ENCODE measurements at regions of chr2 and their contacts with region 1.

Region 1: DNA sequence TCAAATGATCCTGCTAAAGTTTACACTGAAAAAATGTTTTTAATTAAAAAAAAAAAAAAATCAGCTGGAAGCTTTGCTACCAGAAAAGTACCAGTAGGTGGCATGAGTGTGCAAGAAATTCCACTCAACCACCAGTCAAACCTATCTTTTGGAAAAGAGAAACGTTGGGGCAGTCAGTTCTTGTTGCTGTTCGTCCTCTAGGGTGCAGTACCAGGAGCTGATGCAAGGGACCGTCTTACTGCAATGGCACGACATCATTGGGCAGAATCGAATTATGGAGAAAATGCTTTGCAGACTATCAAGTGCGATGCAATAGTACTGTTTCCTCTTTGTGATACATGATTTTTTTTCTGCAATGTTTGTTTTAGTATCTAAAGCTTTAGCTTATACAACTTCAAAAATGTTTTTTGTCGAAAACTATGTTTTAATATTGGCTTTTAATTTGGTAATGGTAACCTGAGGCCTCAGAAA is 18.3 kb downstream of the YPEL5 start:
- DNase-seq: peak; percentile 77
- H3K4me3 Mint-ChIP-seq: no peak overlapping the region
- H3K27ac Mint-ChIP-seq: no peak overlapping the region
- H3K4me1 Mint-ChIP-seq: peaks cover 6% of the 10 kb centered on the region
- H3K27me3 Mint-ChIP-seq: no peaks in the 10 kb centered on the region

Region 2: DNA sequence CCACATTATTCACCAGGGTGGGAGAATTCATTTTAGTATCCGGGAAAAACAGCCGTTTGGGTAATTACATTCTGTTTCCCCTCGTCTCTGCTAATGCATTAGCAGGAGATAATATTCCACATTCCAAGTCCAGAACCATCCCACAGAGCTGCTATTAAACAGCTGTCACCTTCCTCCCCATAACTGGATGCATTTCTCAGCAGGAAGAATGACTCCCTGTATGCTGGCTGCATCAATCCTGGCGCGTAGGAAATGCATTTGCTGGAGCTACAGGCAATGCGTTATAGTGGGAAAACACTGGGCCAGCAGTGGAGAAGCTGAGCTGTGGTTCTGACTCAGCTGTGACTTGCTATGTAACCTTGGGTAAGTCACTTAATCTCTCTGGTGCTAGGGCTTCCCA is 803.9 kb before region 1 on chr2:
- CTCF ChIA-PET with region 1: no interaction called
- intact Hi-C with region 1: no loop called
- DNase-seq: no peak
- H3K4me3 Mint-ChIP-seq: no peak overlapping the region
- H3K27ac Mint-ChIP-seq: no peak overlapping the region
- H3K4me1 Mint-ChIP-seq: no peaks in the 10 kb centered on the region
- H3K27me3 Mint-ChIP-seq: peaks cover 6% of the 10 kb centered on the region

Region 3: GRCh38 chr2:30115141-30115980 is 49.7 kb before region 1 on chr2:
- CTCF ChIA-PET with region 1: interaction called, 10 read pairs
- intact Hi-C with region 1: no loop called
- DNase-seq: peak; percentile 85
- H3K4me3 Mint-ChIP-seq: no peak overlapping the region
- H3K27ac Mint-ChIP-seq: no peak overlapping the region
- H3K4me1 Mint-ChIP-seq: peaks cover 4% of the 10 kb centered on the region
- H3K27me3 Mint-ChIP-seq: no peaks in the 10 kb centered on the region

Region 4: DNA sequence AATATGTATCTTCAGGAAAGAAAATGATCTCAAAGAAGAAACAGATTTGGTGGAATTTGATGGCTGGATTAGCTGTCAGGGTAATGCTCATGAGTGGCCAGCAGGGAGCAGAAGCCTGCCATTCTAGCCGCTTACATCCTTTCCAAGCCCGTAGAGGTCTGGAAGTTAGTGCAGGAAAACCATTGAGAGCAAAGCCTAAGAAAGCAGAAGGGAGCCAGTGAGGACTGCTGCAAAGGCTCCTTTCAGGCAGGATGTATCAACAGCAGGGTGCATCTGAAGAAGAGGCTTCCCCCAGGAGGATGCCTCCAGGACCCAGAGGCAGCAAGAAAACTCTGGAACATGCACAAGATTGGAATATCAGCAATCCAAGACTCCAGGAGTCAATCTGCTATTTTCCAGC is 43.4 kb after region 1 on chr2:
- CTCF ChIA-PET with region 1: interaction called, 49 read pairs
- intact Hi-C with region 1: loop called (anchors 1 kb)
- DNase-seq: peak; percentile 51
- H3K4me3 Mint-ChIP-seq: no peak overlapping the region
- H3K27ac Mint-ChIP-seq: no peak overlapping the region
- H3K4me1 Mint-ChIP-seq: peaks cover 15% of the 10 kb centered on the region
- H3K27me3 Mint-ChIP-seq: no peaks in the 10 kb centered on the region

Region 5: DNA sequence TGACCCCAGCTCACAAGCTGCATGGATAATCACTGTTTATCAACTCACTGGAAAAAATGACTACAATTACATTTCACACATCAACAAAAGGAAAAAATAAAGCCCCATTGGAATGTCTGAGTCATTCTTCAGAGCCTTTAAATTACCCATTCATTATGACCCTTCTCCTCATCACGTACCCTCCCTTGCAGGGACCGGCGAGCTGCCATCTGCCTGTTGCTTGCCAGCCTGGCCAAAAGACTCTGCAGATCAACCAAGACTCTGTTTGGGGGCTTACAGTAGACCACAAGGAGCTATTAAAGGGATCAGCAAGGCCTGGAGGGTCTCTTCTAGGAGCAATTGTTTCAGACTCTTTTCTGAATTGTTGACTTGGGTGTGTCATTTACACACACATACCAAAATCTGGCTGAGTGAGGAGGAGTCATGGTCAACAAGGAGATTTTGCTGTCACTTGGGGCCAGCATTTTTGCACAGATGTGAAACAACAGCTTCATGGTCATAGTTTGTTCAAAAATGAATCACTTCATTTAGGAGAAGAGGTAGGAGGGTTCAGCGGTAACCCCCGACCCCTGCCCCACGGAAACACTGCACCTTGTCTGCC is 108.3 kb after region 1 on chr2:
- CTCF ChIA-PET with region 1: interaction called, 3 read pairs
- intact Hi-C with region 1: loop called (anchors 5 kb)
- DNase-seq: peak; percentile 60
- H3K4me3 Mint-ChIP-seq: no peak overlapping the region
- H3K27ac Mint-ChIP-seq: peak overlapping the region; percentile 68
- H3K4me1 Mint-ChIP-seq: peaks cover 78% of the 10 kb centered on the region
- H3K27me3 Mint-ChIP-seq: no peaks in the 10 kb centered on the region

Region 6: GRCh38 chr2:30686000-30686399 is 520.9 kb after region 1 on chr2:
- CTCF ChIA-PET with region 1: interaction called, 13 read pairs
- intact Hi-C with region 1: no loop called
- DNase-seq: no peak
- H3K4me3 Mint-ChIP-seq: no peak overlapping the region
- H3K27ac Mint-ChIP-seq: no peak overlapping the region
- H3K4me1 Mint-ChIP-seq: no peaks in the 10 kb centered on the region
- H3K27me3 Mint-ChIP-seq: no peaks in the 10 kb centered on the region

Region 7: GRCh38 chr2:31170071-31170698 is 1005.1 kb after region 1 on chr2:
- CTCF ChIA-PET with region 1: interaction called, 6 read pairs
- intact Hi-C with region 1: loop called (anchors 1 kb)
- DNase-seq: peak; percentile 68
- H3K4me3 Mint-ChIP-seq: no peak overlapping the region
- H3K27ac Mint-ChIP-seq: no peak overlapping the region
- H3K4me1 Mint-ChIP-seq: no peaks in the 10 kb centered on the region
- H3K27me3 Mint-ChIP-seq: peaks cover 3% of the 10 kb centered on the region